Psoas muscle (tissue), 8 donors: ENCODE measurements at regions of chr9 and their contacts with region 1.

Region 1: DNA sequence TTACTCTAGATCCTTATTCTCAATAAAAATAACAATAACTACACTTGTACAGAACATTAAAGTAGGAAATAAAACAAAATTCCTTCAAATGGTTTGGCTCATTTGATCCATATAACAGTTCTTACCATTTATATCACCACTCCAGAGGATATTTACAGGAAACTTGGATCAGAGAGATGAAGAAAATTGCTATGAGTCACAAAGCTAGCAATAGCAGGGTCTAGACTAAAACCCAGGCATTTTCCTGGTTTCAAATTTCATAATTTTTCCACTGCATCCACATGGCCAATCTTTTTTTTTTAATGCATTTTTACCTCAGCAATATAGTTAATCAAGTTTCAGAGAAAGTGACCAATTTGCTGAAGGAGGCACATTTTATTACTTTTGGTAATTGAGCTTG is 299.2 kb downstream of the ELAVL2 start:
- DNase-seq: no peak
- ATAC-seq: no peak
- H3K4me3 ChIP-seq: no peak overlapping the region
- H3K27ac ChIP-seq: no peak overlapping the region
- H3K4me1 ChIP-seq: no peaks in the 10 kb centered on the region
- H3K27me3 ChIP-seq: no peaks in the 10 kb centered on the region
- CTCF ChIP-seq: no peak

Region 2: GRCh38 chr9:23483566-23483965 is 43.2 kb before region 1 on chr9:
- intact Hi-C with region 1: no loop called
- DNase-seq: no peak
- ATAC-seq: no peak
- H3K4me3 ChIP-seq: no peak overlapping the region
- H3K27ac ChIP-seq: no peak overlapping the region
- H3K4me1 ChIP-seq: no peaks in the 10 kb centered on the region
- H3K27me3 ChIP-seq: no peaks in the 10 kb centered on the region
- CTCF ChIP-seq: no peak

Region 3: DNA sequence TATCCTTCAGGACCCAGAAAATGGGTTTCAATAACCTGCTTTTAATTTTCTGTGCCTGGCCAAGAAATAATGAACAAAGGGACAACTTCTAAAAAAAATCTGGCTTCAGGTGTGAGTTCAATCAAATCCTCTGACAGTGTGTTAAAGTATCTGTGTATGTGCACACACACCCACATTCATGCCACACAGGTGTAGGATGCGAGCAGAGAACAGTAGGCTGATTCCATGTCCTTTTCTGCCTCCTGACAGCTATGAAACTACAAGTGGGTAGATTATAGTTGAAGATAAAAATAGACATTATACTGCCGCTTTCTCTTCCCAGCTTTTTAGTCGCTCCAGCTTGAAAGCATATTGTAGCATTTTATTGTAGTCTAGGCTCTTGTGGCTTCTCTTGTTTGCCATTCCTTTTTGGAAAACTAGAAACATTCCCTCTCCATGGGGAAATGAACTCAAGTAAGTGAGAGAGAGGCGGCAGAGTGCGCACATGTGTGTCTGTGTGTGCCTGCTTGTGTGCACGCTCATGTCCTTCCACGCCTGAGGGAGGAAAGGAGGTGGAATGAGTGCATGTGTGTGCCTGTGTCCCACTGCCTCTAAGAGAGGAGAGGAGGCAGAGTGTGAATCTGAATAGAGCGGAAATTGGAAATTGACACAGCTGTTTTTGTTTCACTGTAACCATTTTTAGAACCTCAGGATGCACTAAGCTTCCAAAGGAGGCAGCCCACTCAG is 26.2 kb after region 1 on chr9:
- intact Hi-C with region 1: loop called in 1 of 2 experiments (anchors 1 kb)
- DNase-seq: no peak
- ATAC-seq: no peak
- H3K4me3 ChIP-seq: no peak overlapping the region
- H3K27ac ChIP-seq: no peak overlapping the region
- H3K4me1 ChIP-seq: no peaks in the 10 kb centered on the region
- H3K27me3 ChIP-seq: peaks cover 0 to 3% (median 0%) of the 10 kb centered on the region in 3 donors
- CTCF ChIP-seq: no peak